BJ (cell line): ENCODE measurements at regions of chr1 and their contacts with region 1.

Region 1: GRCh38 chr1:31789259-31790065 is 25.3 kb upstream of the ADGRB2 start:
- DNase-seq: peak; percentile 37
- H3K4me3 ChIP-seq: peak overlapping the region; percentile 55
- H3K27me3 ChIP-seq: no peaks in the 10 kb centered on the region
- CTCF ChIP-seq: peak; percentile 99

Region 2: GRCh38 chr1:31548907-31549808 is 240.3 kb before region 1 on chr1:
- CTCF ChIA-PET with region 1: interaction called, 13 read pairs
- POLR2A ChIA-PET with region 1: interaction called, 6 read pairs
- DNase-seq: no peak
- H3K4me3 ChIP-seq: peak overlapping the region; percentile 16
- H3K27me3 ChIP-seq: no peaks in the 10 kb centered on the region; the same call in 1 of the 2 replicates
- CTCF ChIP-seq: peak; percentile 88

Region 3: DNA sequence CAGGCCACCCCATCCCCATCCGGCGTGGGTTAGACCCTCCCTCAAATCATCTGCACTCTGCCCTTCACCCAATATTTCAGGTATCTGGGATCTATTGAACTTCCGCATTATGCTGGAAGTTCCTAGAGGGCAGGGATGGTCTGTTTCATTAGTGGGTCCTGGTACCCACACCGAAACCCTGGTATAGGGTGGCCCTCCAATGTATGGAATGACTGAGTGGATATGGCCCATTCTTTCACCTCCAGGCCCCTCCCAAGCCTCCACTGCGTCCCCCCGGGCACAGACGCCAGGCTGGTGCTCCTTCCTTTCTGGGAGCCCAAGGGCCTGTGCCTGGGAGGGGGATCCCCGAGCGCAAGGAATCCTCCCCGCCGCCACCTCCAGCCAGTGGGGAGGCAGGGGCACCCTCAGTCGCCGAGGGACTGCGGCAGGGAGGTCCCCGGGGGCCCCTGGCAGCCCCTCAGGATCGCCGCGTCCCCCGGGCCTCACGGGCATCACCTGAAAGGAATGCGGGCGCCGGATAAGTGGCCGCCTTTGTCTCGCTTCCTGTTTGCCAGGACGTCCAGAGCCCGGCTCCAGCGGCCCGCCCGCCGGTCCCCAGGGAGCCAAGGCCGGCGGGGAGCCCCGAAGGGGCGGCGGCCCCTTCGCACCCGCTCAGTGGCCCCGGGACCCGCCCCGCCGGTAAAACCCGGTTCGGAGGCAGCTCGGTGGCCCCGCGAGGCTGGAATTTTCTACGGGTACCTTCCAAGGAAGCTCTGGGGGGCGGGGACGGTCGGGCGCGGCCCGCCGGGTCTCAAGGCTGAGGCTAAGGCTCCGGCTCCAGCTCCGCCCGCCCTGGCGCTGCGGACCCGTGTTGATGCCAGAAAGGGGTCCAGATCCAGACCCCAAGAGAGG is 200.8 kb before region 1 on chr1:
- CTCF ChIA-PET with region 1: interaction called, 18 read pairs
- POLR2A ChIA-PET with region 1: no interaction called
- DNase-seq: no peak
- H3K4me3 ChIP-seq: 0 out of 2 replicates have a peak overlapping the region, but pooled peaks have one; percentile 7
- H3K27me3 ChIP-seq: no peaks in the 10 kb centered on the region
- CTCF ChIP-seq: no peak

Region 4: DNA sequence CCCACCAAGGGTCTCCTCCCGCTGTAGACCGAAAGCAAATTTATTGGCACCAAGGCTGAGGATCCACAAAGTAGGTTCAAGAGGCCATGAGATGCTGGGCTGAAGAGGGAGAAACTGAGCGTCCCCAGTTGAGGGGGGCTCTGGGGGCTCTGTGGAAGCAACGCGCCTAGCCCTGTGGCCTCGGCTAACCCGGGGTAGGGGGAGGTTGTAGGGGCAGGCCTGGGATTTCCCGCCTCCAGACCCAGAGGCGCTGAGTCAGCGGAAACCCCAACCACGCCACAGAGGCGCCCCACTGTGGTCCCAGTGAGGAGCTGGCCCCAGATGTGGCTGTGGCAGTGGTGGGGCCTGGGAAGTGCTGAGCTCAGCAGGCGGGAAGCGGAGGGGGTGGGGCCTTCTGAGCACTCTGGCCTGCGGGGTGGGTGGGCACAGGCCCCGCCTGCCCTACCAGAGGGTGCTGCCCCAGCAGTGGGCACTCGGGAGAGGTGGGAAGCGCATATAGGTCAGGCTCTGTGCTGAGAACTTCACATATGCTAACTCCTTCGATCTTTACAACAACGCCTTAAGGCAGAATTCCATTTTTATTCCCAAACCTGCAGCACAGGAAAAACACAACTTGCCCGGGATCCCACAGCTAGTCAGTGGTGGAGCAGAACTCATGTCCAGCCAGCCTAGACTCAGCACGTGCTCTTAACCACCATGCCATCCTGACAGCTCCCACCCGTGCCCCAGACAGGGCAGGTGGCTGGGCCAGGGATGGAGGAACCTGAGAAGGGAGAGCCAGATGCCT is 84.2 kb before region 1 on chr1:
- CTCF ChIA-PET with region 1: interaction called, 10 read pairs
- POLR2A ChIA-PET with region 1: no interaction called
- DNase-seq: no peak
- H3K4me3 ChIP-seq: no peak overlapping the region
- H3K27me3 ChIP-seq: no peaks in the 10 kb centered on the region
- CTCF ChIP-seq: peak; percentile 55

Region 5: GRCh38 chr1:31745096-31745945 is 44.1 kb before region 1 on chr1:
- CTCF ChIA-PET with region 1: interaction called, 16 read pairs
- POLR2A ChIA-PET with region 1: no interaction called
- DNase-seq: no peak
- H3K4me3 ChIP-seq: no peak overlapping the region
- H3K27me3 ChIP-seq: no peaks in the 10 kb centered on the region
- CTCF ChIP-seq: peak; percentile 90

Region 6: DNA sequence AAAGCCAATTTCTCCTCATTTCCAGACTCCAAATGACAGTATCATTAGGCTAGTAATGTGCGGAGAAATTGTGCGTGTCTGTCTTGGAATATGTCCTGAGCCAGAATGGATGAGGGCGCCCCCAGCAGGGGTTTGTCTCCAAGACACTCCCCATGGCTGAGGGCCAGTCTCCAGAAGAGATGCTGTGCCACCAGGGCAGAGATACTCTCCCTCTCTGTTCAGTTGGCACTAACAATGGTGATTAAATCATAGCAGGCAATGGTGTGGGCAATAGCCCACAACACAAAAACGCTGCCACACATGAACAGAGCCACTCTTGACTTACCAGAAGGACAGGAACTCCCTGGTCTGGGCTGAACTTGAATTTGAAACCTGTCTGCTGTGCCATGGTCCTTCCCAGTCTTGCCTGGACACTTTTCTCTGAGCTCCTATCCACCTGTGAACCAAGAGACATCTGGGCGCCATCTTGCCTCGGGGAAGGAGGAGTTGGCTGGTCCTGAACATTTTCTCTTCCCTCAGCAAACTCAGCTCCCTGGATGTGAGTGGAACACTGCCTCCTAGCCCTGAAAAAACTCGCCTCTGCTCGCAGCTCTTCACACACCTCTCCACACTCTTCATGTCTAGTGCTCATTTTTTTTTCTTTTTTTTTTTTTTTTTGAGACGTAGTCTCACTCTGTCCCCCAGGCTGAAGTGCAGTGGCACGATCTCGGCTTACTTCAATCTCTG is 10.5 kb before region 1 on chr1:
- CTCF ChIA-PET with region 1: interaction called, 7 read pairs
- POLR2A ChIA-PET with region 1: interaction called, 15 read pairs
- DNase-seq: no peak
- H3K4me3 ChIP-seq: no peak overlapping the region
- H3K27me3 ChIP-seq: peaks cover 2% of the 10 kb centered on the region; the same call in 1 of the 2 replicates
- CTCF ChIP-seq: no peak

Region 7: DNA sequence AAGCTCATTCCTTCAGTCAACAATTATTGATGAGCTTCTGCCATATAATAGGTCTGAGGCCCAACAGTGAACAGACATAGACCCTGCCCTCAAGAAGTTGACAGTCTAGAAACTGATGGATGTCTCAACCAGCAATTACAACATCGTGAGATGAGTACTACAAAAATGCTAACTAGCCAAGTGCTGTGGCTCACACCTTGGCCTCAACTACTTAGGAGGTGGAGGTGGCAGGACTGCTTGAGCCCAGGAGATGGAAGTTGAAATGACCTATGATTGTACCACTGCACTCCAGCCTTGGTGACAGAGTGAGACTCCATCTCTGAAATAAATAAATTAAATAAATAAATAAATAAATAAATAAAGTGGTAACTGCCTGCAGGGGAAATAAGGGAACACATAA is 160.4 kb after region 1 on chr1:
- CTCF ChIA-PET with region 1: no interaction called
- POLR2A ChIA-PET with region 1: no interaction called
- DNase-seq: no peak
- H3K4me3 ChIP-seq: no peak overlapping the region
- H3K27me3 ChIP-seq: no peaks in the 10 kb centered on the region
- CTCF ChIP-seq: no peak

Region 8: DNA sequence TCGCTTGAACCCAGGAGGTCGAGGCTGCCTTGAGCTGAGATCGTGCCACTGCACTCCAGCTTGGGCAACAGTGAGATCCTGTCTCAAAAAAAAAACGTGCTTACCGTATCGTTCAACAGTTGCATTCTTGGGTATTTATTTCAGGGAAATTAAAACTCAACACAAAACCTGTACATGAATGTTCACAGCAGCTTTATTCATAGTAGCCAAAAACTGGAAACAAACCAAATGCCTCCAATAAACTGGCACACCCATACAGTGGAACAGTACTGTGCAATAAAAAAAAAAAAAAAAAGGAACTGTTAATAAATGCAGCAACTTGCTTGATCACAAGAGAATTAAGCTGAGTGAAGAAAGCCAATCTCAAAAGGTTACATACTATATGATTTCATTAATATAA is 230.9 kb after region 1 on chr1:
- CTCF ChIA-PET with region 1: no interaction called
- POLR2A ChIA-PET with region 1: no interaction called
- DNase-seq: no peak
- H3K4me3 ChIP-seq: no peak overlapping the region
- H3K27me3 ChIP-seq: no peaks in the 10 kb centered on the region
- CTCF ChIP-seq: no peak